ENCODE measurements at regions of chr1 and their contacts with region 1.

Region 1: DNA sequence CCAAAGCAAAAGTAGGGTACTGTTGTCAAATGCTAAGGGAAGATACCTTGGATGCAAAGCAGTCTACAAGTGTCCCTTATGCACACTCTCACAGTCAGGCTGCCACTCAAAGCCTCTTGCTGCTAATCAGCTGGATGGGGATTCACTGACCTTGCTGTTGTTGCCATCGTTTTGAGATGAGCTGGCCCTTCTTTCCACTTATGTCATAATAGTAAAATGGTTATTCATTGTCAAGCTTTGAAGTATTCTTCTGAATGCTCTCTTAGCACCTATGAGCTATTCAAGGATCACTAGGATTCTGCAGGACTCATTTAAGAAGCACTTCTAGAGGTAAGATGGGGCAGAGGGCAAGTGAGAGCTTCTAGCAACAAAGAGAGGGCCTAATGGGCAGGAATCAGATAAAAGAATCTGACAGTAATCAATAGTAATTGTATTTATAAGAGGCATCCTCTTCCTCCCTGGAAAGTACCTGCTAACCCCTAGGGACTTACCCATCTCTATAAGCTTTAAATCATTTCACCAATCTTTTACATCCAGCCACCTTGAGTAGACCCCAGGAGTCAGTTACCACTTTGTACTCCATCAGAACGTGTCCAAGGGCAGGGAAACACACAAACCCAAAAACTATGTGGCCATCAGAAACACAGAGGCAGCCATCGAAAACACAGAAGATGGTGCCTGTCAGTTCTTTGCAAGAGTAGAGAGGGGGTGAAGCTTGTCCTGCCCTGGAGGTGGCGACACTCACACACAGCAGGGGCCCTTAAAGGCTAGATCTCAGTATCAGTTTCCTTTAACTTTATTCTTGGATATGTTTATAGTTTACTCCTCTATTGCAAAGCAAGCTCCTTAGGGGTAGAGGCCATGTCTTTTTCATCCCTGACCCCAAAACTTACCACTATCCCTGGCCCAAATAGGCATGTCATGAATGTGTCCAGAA is 103.7 kb upstream of the NFIA start:
- DNase-seq: no peak
- H3K4me3 ChIP-seq: no peak overlapping the region
- CTCF ChIP-seq: no peak
- POLR2A ChIP-seq: no peak

Region 2: DNA sequence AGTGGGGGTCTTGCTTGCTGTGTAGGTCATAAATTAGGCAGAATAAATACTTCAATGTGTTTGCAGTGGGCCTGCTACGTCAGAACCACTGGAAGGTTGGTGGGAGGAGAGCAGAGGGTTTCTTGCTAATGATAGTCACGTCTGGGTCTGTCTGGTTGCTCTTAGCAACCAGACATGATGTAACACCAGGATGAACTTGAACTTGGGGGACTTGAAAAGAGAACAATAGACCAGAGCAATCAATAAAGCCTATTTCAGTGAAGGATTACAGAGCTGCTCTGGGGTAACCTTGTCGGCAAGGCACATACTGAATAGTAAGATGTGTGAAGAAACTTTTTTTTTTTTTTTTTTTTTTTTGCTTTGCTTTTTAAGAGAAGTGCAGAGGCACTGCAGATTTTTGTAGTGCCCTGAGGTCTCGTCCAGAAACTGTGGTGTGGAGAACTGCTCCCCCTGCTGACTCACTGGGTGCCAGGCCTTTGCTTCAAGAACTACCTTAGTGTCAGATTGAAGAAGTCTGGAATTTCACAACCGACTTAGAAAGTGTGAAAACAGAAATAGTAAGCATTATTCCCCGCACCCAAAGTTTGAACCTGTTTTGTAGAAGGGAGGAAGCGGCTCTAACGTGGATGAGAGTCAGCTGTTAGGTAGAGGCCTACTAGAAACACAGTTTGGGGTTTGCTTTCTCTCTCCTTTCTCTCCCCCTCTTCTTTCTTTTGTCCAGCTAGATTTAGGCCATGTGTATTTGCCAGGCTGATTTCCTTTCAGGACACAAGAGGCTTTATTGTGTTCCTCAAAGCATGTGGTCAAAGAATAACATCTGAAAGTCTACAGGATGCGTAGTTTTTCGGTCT is 474.6 kb after region 1 on chr1:
- intact Hi-C with region 1: loop called (anchors 10 kb)
- DNase-seq: peak; percentile 92 to 97
- H3K4me3 ChIP-seq: no peak overlapping the region
- CTCF ChIP-seq: peak in 1 of 3 donors; percentile 95
- POLR2A ChIP-seq: no peak